ENCODE measurements at regions of chr4 and their contacts with region 1.

Region 1: GRCh38 chr4:145420595-145421214 is 60.9 kb upstream of the SMAD1 start:
- DNase-seq: no peak
- H3K4me3 ChIP-seq: no peak overlapping the region
- H3K27ac ChIP-seq: no peak overlapping the region
- H3K4me1 ChIP-seq: no peaks in the 10 kb centered on the region
- H3K27me3 ChIP-seq: no peaks in the 10 kb centered on the region
- CTCF ChIP-seq: no peak

Region 2: DNA sequence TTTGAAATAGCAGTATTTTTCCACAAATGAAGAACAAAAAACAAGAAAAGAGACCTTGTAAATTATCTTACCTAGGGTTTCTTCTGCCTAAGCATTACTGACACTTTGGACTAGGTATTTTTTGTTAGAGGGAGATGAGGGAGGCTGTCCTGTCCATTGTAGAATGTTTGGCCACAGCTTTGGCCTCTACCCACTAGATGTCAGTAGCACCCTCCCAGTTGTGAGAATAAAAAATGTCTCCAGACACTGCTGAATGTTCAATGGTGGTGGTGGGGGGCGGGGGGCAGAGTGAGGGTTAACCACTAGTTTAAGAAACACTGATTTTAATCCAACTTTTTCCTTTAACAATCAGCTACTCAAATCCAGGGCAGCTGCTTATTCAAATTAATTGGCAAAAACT is 266.1 kb before region 1 on chr4:
- CTCF ChIA-PET with region 1: no interaction called
- POLR2A ChIA-PET with region 1: no interaction called
- intact Hi-C with region 1: no loop called
- DNase-seq: no peak
- H3K4me3 ChIP-seq: no peak overlapping the region
- H3K27ac ChIP-seq: no peak overlapping the region
- H3K4me1 ChIP-seq: no peaks in the 10 kb centered on the region
- H3K27me3 ChIP-seq: no peaks in the 10 kb centered on the region
- CTCF ChIP-seq: peak; percentile 44; the same call in 1 of the 2 replicates

Region 3: GRCh38 chr4:145295547-145295946 is 125.2 kb before region 1 on chr4:
- CTCF ChIA-PET with region 1: no interaction called
- POLR2A ChIA-PET with region 1: interaction called, 10 read pairs
- intact Hi-C with region 1: no loop called
- DNase-seq: no peak
- H3K4me3 ChIP-seq: no peak overlapping the region
- H3K27ac ChIP-seq: no peak overlapping the region
- H3K4me1 ChIP-seq: no peaks in the 10 kb centered on the region
- H3K27me3 ChIP-seq: no peaks in the 10 kb centered on the region
- CTCF ChIP-seq: no peak

Measured in A673 (cell line).